SK-N-SH (cell line): ENCODE measurements at regions of chr1 and their contacts with region 1.

Region 1: DNA sequence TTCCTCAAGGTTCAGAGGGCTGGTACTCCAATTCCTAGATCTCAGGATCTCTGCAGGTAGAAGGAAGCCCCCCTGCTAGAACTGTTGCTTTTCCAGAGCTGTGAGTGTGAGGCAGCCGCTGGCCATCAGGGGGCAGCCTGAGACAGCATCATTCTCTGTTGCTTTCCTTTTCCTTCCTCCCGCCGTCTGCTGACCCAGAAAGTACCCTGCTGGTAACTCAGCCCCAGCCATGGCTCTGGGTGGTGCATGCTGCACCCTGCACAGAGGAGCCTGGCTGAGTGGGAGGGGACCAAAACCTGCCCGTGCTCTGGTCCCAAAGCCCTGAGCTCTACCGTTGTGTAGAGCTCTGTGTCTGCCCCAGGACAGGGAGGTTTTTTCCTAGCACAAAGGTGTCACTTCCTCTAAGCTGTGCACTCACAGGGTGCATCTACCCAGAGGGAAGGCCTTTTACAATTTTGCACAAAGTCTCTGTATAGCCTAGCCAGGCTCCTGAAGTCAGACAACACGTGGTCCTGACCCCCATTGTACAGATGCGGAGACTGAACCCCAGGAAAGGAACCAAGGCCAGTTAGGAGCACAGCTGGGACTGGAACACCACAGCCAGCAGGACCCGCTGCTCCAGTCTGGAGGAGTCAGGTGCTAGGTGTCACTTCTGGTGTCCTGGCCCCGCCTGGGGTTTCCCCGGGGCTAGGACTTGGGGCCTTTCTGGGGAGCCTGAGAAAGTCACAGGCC is 5.6 kb upstream of the FAM131C start:
- DNase-seq: peak; percentile 84
- H3K4me3 ChIP-seq: peak overlapping the region in 1 of 2 experiments; percentile 18; a peak in 1 of 4 replicates
- H3K27ac ChIP-seq: no peak overlapping the region; a peak in 1 of 4 replicates
- H3K4me1 ChIP-seq: peaks cover 15 to 17% of the 10 kb centered on the region in 2 experiments; a peak in 3 of 4 replicates
- H3K27me3 ChIP-seq: no peaks in the 10 kb centered on the region
- CTCF ChIP-seq: peak; percentile 93
- EP300 ChIP-seq: no peak
- RAD21 ChIP-seq: peak; percentile 98

Region 2: DNA sequence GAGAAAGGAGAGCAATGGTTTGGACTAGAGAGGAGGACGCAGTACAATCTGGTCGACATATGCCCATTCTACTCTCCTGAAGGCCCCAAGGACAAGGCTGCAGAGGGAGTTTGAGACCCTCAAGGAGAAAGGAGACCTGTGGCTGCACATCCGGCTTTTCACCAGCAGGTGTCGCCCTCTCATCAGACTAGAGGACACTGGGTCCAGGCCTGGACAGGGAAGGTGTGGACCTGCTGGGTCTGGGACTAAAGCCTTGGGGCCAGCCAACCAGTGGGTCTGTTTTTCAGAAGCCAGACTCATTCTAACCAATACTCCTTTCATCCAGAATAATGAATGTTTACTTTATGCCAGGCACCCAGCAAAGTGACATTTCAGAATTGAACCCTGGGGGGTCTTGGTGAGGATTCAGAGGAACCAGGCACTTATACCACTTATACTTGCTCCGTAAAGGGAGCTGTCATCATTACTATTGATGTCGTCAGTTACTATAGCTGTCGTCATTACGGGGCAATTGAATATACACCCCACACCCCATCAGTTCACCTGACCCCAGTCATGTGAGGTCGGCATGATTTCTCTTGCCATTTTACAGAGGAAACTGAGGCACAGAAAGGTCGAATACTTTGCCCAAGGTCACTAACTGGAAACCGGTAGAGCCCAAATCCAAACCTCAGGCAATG is 69.9 kb before region 1 on chr1:
- CTCF ChIA-PET with region 1: interaction called, 10 read pairs
- POLR2A ChIA-PET with region 1: no interaction called
- DNase-seq: peak; percentile 91
- H3K4me3 ChIP-seq: no peak overlapping the region; a peak in 1 of 4 replicates
- H3K27ac ChIP-seq: no peak overlapping the region
- H3K4me1 ChIP-seq: peaks cover 0 to 6% of the 10 kb centered on the region in 2 experiments; a peak in 1 of 4 replicates
- H3K27me3 ChIP-seq: no peaks in the 10 kb centered on the region
- CTCF ChIP-seq: peak; percentile 97
- EP300 ChIP-seq: no peak
- RAD21 ChIP-seq: peak; percentile 98

Region 3: DNA sequence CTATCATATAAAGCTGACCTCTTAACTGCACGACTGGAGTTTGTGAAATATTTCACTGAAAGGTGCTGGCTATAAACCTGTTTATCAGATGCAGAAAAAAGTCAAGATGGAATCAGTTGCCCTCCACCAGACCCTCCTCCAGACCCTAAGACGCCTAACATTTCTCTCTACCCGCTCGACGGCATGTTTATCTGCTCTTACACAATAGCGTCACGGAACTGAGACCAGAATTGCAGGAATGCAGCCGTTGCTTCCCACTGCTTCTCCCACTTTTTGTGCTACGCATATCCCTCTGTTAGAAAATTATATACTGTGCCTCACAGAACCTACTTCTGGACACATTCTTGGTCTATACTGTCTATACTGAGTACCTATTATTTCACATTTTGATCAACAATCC is 22.5 kb after region 1 on chr1:
- CTCF ChIA-PET with region 1: interaction called, 10 read pairs
- POLR2A ChIA-PET with region 1: no interaction called
- DNase-seq: no peak
- H3K4me3 ChIP-seq: no peak overlapping the region
- H3K27ac ChIP-seq: no peak overlapping the region
- H3K4me1 ChIP-seq: no peaks in the 10 kb centered on the region; a peak in 1 of 4 replicates
- H3K27me3 ChIP-seq: no peaks in the 10 kb centered on the region
- CTCF ChIP-seq: no peak
- EP300 ChIP-seq: no peak
- RAD21 ChIP-seq: no peak

Region 4: DNA sequence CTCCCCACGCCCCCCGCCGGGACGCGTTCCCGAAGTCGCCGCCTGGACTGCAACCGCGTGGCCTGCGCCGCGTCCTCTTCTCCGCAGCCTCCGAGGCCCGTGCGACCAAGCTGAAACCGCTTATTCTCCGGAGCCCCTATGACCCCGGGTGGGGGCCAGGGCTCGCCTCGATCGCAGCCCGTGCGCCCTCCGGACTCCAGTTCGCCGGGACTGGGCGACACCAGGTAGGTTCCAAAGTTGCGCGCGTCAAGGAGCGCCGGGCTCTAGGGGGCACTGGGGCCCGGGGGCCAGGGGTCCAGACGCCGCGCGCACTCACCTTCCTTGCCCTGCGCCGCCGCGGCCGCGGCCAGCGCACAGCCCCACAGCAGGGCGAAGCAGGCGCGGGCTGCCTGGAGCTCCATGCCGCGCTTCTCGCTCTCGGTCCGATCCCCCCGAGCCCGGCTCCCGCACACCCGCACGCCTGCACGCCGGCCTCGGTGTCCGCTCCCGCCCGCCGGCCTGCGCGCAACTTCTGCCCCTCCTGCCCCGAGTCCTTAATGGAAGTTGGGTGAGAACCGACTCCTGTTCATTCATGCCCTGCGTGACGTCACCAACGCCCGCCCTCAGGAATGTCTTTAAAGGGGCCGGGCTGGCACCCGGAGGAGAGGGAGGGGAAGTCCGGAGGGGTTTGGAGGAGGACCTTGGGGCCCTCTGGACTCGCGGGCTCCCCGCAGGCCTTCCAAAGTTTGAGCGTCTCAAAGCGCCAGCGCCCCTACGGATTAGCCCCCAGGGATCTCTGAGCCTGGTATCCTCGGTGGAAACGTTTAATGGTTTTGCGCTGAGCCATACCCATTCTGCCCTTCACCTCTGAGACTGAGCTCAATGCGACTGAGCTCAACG is 76.7 kb after region 1 on chr1 and contains the start of gene EPHA2:
- CTCF ChIA-PET with region 1: interaction called, 125 read pairs
- POLR2A ChIA-PET with region 1: no interaction called
- DNase-seq: peak; percentile 86
- H3K4me3 ChIP-seq: peak within 1 kb of the TSS; percentile 57 to 91
- H3K27ac ChIP-seq: peak within 1 kb of the TSS; percentile 41 to 75; a peak in 3 of 4 replicates
- H3K4me1 ChIP-seq: peaks cover 26 to 32% of the 10 kb centered on the region in 2 experiments; a peak in 3 of 4 replicates
- H3K27me3 ChIP-seq: no peaks in the 10 kb centered on the region
- CTCF ChIP-seq: peak; percentile 10; the same call in 1 of the 2 replicates
- EP300 ChIP-seq: no peak
- RAD21 ChIP-seq: no peak
- polyA plus RNA-seq, gene EPHA2: 82.2 and 126 TPM in 2 replicates

Region 5: DNA sequence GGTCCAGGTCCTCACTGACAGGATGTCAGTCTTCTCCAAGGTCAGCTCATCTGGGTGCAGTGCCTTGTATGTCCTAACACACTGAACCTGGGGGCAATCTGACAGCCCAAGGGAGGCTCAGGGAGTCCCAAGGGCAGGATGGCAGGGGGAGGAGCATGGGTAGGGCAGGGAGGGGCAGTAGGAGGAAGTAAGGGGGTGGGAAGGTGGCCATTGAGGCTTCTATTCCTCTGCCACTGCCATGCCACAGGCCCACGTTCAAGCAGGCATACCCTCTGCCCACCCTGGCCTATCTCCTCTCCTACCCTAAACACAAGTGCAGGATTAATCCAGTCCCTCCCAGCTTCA is 120.0 kb after region 1 on chr1:
- CTCF ChIA-PET with region 1: interaction called, 513 read pairs
- POLR2A ChIA-PET with region 1: no interaction called
- DNase-seq: no peak
- H3K4me3 ChIP-seq: no peak overlapping the region
- H3K27ac ChIP-seq: no peak overlapping the region
- H3K4me1 ChIP-seq: no peaks in the 10 kb centered on the region; a peak in 1 of 4 replicates
- H3K27me3 ChIP-seq: no peaks in the 10 kb centered on the region
- CTCF ChIP-seq: no peak
- EP300 ChIP-seq: no peak
- RAD21 ChIP-seq: no peak

Region 6: GRCh38 chr1:16243936-16244649 is 165.0 kb after region 1 on chr1:
- CTCF ChIA-PET with region 1: interaction called, 94 read pairs
- POLR2A ChIA-PET with region 1: interaction called, 3 read pairs
- DNase-seq: peak; percentile 71
- H3K4me3 ChIP-seq: no peak overlapping the region; a peak in 1 of 4 replicates
- H3K27ac ChIP-seq: peak overlapping the region in 1 of 2 experiments; percentile 6; a peak in 1 of 4 replicates
- H3K4me1 ChIP-seq: peaks cover 13 to 38% of the 10 kb centered on the region in 2 experiments; a peak in 3 of 4 replicates
- H3K27me3 ChIP-seq: no peaks in the 10 kb centered on the region
- CTCF ChIP-seq: peak; percentile 83
- EP300 ChIP-seq: no peak
- RAD21 ChIP-seq: peak; percentile 94